ENCODE measurements at regions of chr9 and their contacts with region 1.

Region 1: GRCh38 chr9:14400658-14400995 is 86.7 kb upstream of the NFIB start:
- DNase-seq: peak; percentile 23
- H3K4me3 ChIP-seq: peak overlapping the region; percentile 44
- H3K27ac ChIP-seq: peak overlapping the region; percentile 32
- H3K4me1 ChIP-seq: peaks cover 29% of the 10 kb centered on the region
- H3K27me3 ChIP-seq: no peaks in the 10 kb centered on the region
- CTCF ChIP-seq: peak; percentile 73

Region 2: GRCh38 chr9:13351778-13352386 is 1048.7 kb before region 1 on chr9:
- intact Hi-C with region 1: loop called (anchors 10 kb)
- DNase-seq: no peak
- H3K4me3 ChIP-seq: no peak overlapping the region
- H3K27ac ChIP-seq: no peak overlapping the region
- H3K4me1 ChIP-seq: no peaks in the 10 kb centered on the region
- H3K27me3 ChIP-seq: no peaks in the 10 kb centered on the region
- CTCF ChIP-seq: peak; percentile 79

Region 3: GRCh38 chr9:14156046-14156445 is 244.6 kb before region 1 on chr9:
- intact Hi-C with region 1: no loop called
- DNase-seq: no peak
- H3K4me3 ChIP-seq: no peak overlapping the region
- H3K27ac ChIP-seq: peak overlapping the region; percentile 33
- H3K4me1 ChIP-seq: peaks cover 99% of the 10 kb centered on the region
- H3K27me3 ChIP-seq: no peaks in the 10 kb centered on the region
- CTCF ChIP-seq: no peak

Measured in left ventricle myocardium inferior (tissue), 1 donor.